ENCODE measurements at regions of chr16 and their contacts with region 1.

Region 1: GRCh38 chr16:2838928-2839327 is 8.8 kb downstream of the ZG16B start:
- DNase-seq: peak; percentile 77
- ATAC-seq: peak; percentile 67
- H3K4me3 Mint-ChIP-seq: no peak overlapping the region
- H3K27ac Mint-ChIP-seq: no peak overlapping the region
- H3K4me1 Mint-ChIP-seq: peaks cover 31% of the 10 kb centered on the region
- H3K27me3 Mint-ChIP-seq: peaks cover 3% of the 10 kb centered on the region

Region 2: DNA sequence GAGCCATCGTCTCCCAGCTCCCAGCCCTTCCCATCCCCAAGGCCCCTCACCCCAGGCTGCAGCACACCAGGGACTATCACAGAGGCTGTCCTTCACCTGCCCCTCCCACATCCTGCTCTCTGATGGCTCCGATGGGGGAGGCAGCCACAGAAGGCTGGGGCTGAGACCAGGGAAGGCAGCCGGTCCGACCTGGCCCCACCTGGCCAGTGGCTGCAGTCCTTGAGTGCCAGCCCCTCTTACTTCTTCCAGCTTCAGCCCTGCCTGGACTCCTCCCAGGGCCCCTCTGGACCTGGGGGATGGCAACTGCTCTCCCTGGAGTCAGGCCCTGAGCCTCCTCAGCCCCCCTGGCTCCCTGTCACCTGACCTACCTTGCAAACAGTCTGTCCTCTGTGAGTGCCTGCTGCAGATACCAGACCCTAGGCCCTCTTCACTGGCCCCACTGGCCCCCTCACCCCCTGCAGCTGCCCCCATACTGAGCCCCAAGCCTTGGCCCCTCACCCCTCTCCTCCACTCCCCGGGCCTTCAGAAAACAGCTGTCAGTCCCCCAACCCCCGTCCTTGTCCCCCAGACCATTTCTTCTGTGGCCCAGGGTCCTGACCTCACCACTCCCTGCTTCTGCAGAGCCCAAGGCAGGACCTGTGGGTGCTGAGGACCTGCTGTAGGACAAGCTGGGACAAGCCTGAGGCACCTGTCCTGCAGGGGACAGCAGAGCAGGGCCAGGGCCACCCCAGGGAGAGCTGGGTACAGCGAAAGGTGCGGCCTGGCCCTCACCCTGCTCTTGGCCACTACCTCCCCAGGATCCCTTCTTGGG is 99.1 kb before region 1 on chr16:
- CTCF ChIA-PET with region 1: no interaction called
- POLR2A ChIA-PET with region 1: no interaction called
- intact Hi-C with region 1: no loop called
- DNase-seq: no peak
- ATAC-seq: no peak
- H3K4me3 Mint-ChIP-seq: no peak overlapping the region
- H3K27ac Mint-ChIP-seq: no peak overlapping the region
- H3K4me1 Mint-ChIP-seq: no peaks in the 10 kb centered on the region
- H3K27me3 Mint-ChIP-seq: peaks cover 1% of the 10 kb centered on the region

Region 3: DNA sequence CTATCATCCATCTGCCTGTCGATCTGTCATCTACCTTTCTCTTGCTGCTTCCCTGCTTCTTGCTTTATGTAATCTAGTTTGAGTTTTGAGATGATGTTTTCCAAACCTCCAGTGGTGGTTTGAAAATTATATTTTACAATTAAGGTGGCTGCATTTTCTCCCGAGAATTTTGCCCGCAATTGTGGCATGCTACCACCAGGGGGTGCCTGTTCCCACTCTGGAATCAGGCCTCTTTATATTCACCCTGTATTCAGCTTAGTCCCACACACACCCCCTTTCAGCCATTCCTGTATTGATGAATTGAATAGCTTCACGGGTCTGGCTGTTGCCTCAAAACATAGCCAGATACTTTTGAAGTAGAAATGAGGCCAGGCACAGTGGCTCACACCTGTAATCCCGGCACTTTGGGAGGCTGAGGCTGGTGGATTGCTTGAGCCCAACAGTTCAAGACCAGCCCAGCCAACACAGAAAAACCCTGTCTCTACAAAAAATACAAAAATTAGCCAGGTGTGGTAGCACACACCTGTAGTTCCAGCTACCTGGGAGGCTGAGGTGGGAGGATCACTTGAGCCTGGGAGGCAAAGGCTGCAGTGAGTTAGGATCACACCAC is 15.9 kb after region 1 on chr16:
- CTCF ChIA-PET with region 1: interaction called, 11 read pairs
- POLR2A ChIA-PET with region 1: no interaction called
- intact Hi-C with region 1: no loop called
- DNase-seq: peak; percentile 53
- ATAC-seq: no peak
- H3K4me3 Mint-ChIP-seq: no peak overlapping the region
- H3K27ac Mint-ChIP-seq: no peak overlapping the region
- H3K4me1 Mint-ChIP-seq: peaks cover 4% of the 10 kb centered on the region
- H3K27me3 Mint-ChIP-seq: peaks cover 3% of the 10 kb centered on the region

Region 4: GRCh38 chr16:2874912-2875362 is 36.0 kb after region 1 on chr16:
- CTCF ChIA-PET with region 1: interaction called, 15 read pairs
- POLR2A ChIA-PET with region 1: no interaction called
- intact Hi-C with region 1: no loop called
- DNase-seq: peak; percentile 85
- ATAC-seq: peak; percentile 100
- H3K4me3 Mint-ChIP-seq: no peak overlapping the region
- H3K27ac Mint-ChIP-seq: no peak overlapping the region
- H3K4me1 Mint-ChIP-seq: no peaks in the 10 kb centered on the region
- H3K27me3 Mint-ChIP-seq: peaks cover 1% of the 10 kb centered on the region

Region 5: GRCh38 chr16:2919511-2920255 is 80.8 kb after region 1 on chr16:
- CTCF ChIA-PET with region 1: interaction called, 3 read pairs
- POLR2A ChIA-PET with region 1: no interaction called
- intact Hi-C with region 1: loop called in 1 of 2 experiments (anchors 2 kb)
- DNase-seq: peak; percentile 72
- ATAC-seq: peak; percentile 60
- H3K4me3 Mint-ChIP-seq: no peak overlapping the region
- H3K27ac Mint-ChIP-seq: no peak overlapping the region
- H3K4me1 Mint-ChIP-seq: peaks cover 18% of the 10 kb centered on the region
- H3K27me3 Mint-ChIP-seq: no peaks in the 10 kb centered on the region

Region 6: GRCh38 chr16:2926650-2927646 is 88.0 kb after region 1 on chr16:
- CTCF ChIA-PET with region 1: interaction called, 3 read pairs
- POLR2A ChIA-PET with region 1: no interaction called
- intact Hi-C with region 1: loop called in 1 of 2 experiments (anchors 1 kb)
- DNase-seq: peak; percentile 93
- ATAC-seq: peak; percentile 99
- H3K4me3 Mint-ChIP-seq: no peak overlapping the region
- H3K27ac Mint-ChIP-seq: no peak overlapping the region
- H3K4me1 Mint-ChIP-seq: peaks cover 11% of the 10 kb centered on the region
- H3K27me3 Mint-ChIP-seq: no peaks in the 10 kb centered on the region

Region 7: DNA sequence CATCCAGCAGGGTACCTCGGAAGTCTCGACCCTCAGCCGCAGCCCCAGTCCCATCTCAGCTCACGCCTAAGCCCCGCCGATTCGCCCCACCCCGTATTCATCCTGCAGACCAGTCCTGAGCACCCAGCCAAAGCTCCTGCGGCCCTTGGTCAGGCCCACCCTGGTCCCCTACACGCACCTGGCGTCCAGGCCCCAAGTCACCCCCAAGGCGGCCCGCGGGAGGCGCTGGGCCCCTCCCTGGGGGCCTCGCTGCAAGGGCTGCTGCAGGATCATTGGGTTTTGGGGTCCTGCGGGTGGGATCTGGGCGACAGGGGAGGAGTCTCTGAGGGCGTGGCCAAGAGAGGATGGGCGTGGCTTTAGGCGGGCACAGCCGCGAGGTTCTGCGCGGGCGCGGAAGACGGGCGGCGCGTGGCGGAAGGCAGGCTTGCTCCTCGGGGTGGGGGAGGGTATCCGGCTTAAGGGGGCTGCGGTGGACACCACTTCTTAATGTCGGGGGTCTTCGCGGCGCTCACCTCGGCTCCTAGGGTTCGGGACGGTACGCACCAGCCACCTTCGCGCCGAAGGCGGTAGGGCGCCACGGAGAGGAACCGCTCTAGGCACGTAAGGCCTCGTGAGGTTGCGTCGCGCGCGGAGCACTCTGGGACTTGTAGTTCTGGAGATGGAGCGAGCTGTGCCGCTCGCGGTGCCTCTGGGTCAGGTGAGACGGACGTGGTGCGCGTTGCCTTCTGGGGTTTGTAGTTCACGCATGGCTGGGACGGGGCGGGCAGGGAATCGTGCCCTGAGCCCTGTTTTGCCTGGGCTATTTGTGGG is 184.9 kb after region 1 on chr16 and contains the starts of genes HCFC1R1 and THOC6:
- CTCF ChIA-PET with region 1: no interaction called
- POLR2A ChIA-PET with region 1: no interaction called
- intact Hi-C with region 1: no loop called
- DNase-seq: peak; percentile 99
- ATAC-seq: peak; percentile 74
- H3K4me3 Mint-ChIP-seq: peak within 1 kb of the TSS; percentile 74
- H3K27ac Mint-ChIP-seq: peak within 1 kb of the TSS; percentile 97
- H3K4me1 Mint-ChIP-seq: peaks cover 50% of the 10 kb centered on the region
- H3K27me3 Mint-ChIP-seq: peaks cover 4% of the 10 kb centered on the region
- total RNA-seq, gene HCFC1R1: 30.0 to 30.7 TPM
- total RNA-seq, gene THOC6: 46.9 to 50.2 TPM